Panc1 (cell line): ENCODE measurements at regions of chr7 and their contacts with region 1.

Region 1: DNA sequence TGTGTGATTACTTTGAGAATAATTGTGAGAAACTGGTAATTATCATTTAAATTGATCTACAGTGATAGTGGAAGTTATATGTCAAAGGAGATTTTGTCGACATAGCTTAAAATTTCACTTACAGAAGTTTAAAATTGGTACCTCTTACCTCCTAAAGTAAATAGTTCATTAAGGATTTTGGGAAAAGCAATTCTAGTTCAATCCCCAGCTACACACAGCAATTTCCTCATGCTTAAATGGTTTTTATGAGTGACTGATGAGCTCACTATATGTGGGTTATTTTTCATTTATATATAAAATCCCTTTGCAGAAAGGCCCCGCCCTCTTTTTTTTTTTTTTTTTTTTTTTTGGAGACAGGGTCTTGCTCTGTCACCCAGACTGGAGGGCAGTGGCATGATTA is 12.7 kb downstream of the KMT2E start:
- DNase-seq: no peak
- ATAC-seq: no peak
- H3K4me3 ChIP-seq: no peak overlapping the region
- H3K27ac ChIP-seq: no peak overlapping the region
- H3K4me1 ChIP-seq: peaks cover 25% of the 10 kb centered on the region
- H3K27me3 ChIP-seq: no peaks in the 10 kb centered on the region
- CTCF ChIP-seq: no peak

Region 2: DNA sequence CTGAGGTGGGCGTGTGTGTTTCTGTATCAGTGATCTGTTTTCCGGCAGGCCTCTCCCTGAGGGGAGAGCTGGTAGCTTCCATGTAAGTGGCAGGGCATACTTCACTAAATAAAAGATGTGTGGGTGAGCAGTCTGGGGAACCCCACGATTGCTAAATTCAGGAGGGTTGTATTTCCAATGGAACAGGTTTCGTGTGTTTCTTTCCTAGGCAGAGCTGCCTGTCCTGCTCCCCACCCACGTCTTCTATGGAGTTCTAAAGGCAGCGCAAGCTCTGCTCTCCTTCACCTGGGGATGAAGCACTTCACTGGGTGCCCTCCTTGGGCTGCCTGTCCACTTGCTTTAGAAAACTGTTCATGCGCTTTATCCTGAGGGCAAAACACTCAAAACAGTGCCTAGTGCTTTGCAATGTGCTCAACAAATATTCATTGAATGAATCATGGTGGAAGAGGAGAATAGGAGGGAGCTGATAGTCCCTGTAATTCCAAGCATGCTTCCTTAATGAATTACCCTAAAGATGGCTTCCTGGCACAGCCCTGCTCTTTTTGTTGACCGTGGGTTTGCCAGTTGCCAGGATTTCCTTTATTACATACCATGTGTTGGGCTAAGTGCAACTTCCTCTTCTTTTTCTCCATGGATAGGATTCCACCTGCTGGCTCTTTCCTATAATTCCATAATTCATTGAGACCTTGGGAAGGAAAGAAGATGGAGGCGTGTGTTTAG is 412.6 kb after region 1 on chr7:
- CTCF ChIA-PET with region 1: interaction called, 10 read pairs
- POLR2A ChIA-PET with region 1: no interaction called
- in situ Hi-C with region 1: no loop called
- intact Hi-C with region 1: no loop called
- DNase-seq: peak; percentile 12
- ATAC-seq: peak; percentile 81
- H3K4me3 ChIP-seq: no peak overlapping the region
- H3K27ac ChIP-seq: no peak overlapping the region
- H3K4me1 ChIP-seq: no peaks in the 10 kb centered on the region
- H3K27me3 ChIP-seq: no peaks in the 10 kb centered on the region
- CTCF ChIP-seq: no peak

Region 3: DNA sequence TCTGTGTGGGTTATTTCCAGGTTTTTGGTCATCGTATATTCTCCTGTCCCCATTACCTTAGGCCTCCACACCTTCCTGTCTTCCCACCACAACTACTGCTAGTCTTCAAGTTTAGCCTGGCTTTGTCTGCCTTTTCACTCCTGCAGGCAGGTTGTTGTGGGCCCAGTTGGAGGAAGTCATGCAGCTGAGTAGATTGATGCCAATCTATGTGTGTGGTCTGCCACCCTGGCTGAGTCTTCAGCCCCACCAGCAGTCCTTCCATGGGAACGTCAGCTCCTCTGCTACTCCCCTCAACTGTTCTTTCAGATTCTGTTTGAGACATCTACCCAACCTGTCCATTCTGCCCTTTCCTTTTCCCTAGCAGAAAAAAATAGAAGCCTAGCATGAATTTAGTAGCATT is 511.6 kb after region 1 on chr7:
- CTCF ChIA-PET with region 1: no interaction called
- POLR2A ChIA-PET with region 1: no interaction called
- in situ Hi-C with region 1: no loop called
- intact Hi-C with region 1: no loop called
- DNase-seq: no peak
- ATAC-seq: no peak
- H3K4me3 ChIP-seq: no peak overlapping the region
- H3K27ac ChIP-seq: no peak overlapping the region
- H3K4me1 ChIP-seq: peaks cover under 1% of the 10 kb centered on the region; the same call in 1 of the 2 replicates
- H3K27me3 ChIP-seq: no peaks in the 10 kb centered on the region
- CTCF ChIP-seq: no peak